K562 (cell line): ENCODE measurements at regions of chr2 and their contacts with region 1.

Region 1: DNA sequence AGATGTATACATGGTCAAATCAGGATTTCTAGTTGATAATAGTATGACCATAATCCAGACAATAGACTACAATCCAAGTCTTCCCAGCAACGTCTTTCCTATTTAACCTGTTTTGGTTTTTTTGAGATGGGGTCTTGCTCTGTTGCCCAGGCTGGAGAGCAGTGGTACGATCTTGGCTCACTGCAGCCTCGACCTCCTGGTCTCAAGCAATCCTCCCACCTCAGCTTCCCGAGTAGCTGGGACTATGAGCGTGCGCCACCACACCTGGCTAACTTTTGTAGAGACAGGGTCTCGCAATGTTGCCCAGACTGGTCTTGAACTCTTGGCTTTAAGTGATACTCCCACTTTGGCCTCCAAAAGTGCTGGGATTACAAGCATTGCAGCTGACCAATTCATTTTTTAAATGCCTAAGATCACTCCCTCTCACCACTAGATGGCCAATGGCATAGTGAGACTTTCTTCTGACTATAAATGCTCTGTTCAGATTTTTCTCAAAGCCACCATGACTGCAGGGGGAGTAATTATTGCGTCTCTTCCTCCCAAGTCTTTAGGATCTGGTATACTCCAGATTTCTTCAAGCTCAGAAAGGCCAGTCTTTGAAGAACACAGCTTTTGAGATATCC is 47.6 kb downstream of the HNRNPLL start:
- DNase-seq: peak; percentile 22 to 47 (median 31)
- ATAC-seq: peak; percentile 64
- H3K4me3 ChIP-seq: no peak overlapping the region
- H3K27ac ChIP-seq: no peak overlapping the region
- H3K4me1 ChIP-seq: peaks cover 0 to 10% of the 10 kb centered on the region in 2 experiments; a peak in 4 of 5 replicates
- H3K27me3 ChIP-seq: no peaks in the 10 kb centered on the region
- CTCF ChIP-seq: peak; percentile 45 to 62 (median 56); a peak in 5 of 6 replicates
- EP300 ChIP-seq: no peak
- POLR2A ChIP-seq: 0 out of 2 replicates have a peak, but pooled peaks have one; percentile 50
- RAD21 ChIP-seq: peak; percentile 21 to 35; a peak in 2 of 4 replicates

Region 2: DNA sequence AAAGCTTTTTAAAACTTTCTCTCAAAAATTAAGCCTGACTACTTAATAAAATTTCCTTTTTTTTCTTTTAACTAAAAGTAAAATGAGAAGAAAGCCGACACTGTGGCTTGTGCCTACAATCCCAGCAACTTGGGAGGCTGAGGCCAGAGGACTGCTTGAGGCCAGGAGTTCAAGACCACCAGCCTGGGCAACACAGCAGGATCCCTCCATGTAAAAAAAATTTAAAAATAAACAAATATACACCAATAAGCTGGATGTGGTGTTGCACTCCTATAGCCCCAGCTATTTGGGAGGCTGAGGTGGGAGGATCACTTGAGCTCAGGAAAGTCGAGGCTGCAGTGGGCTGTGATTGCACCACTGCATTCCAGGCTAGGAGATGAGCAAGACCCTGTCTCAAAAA is 10.2 kb after region 1 on chr2:
- CTCF ChIA-PET with region 1: no interaction called
- POLR2A ChIA-PET with region 1: interaction called, 11 read pairs
- in situ Hi-C with region 1: no loop called
- intact Hi-C with region 1: no loop called
- DNase-seq: no peak
- ATAC-seq: no peak; the same call in 2 of the 3 replicates
- H3K4me3 ChIP-seq: no peak overlapping the region
- H3K27ac ChIP-seq: no peak overlapping the region
- H3K4me1 ChIP-seq: no peaks in the 10 kb centered on the region
- H3K27me3 ChIP-seq: no peaks in the 10 kb centered on the region
- CTCF ChIP-seq: no peak
- EP300 ChIP-seq: no peak
- POLR2A ChIP-seq: no peak
- RAD21 ChIP-seq: no peak